Right ventricle myocardium inferior (tissue), 1 donor: ENCODE measurements at regions of chr3 and their contacts with region 1.

Region 1: GRCh38 chr3:120245386-120245785 is 39.6 kb downstream of the GPR156 start:
- DNase-seq: no peak
- ATAC-seq: no peak

Region 2: DNA sequence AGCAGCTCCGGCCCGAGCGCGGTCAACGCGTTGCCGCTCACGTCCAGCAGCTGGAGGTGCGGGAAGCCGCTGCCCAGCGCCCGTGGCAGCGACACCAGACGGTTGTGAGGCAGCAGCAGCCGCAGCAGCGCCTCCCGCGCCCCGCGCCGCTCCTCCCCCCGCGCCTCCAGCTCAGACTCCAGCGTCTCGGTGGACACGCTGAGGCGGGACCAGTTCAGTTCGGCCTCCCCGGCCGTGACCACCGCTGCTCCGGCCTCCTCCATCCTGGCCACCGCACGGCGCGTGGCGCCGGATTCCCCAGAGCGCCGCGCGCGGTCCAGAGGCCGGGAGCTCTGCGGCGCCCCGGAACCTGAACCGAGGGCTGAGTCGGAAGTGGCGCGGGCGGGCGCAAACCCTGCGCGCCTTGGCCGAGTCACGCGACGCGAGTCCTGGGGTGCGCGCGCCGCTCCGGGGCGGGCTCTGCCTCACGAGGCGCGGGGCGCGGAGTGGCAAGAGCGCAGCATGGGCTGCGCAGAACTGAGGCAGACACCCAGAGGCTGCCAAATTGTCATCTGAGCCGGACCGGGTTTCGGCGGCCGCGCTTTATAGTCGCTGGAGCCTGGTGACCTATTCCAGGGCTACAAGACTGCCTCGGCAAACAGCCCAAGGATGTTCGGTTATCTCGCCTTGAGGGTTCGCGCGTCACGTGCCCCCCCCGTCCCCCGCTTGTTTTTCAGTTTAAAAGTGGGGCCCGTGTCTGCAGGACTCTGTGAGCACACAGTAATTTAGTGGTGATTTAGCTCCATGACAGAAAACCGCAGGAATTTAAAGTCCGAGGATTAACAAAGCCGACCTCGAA is 103.8 kb after region 1 on chr3 and contains the start of gene LRRC58:
- intact Hi-C with region 1: loop called (anchors 2 kb)
- DNase-seq: peak; percentile 97
- ATAC-seq: peak; percentile 98
- total RNA-seq, gene LRRC58: 8.7 TPM

Region 3: GRCh38 chr3:120795017-120795648 is 549.7 kb after region 1 on chr3:
- intact Hi-C with region 1: loop called (anchors 2 kb)
- DNase-seq: peak; percentile 82
- ATAC-seq: peak; percentile 86